H1 (cell line): ENCODE measurements at regions of chr13 and their contacts with region 1.

Region 1: DNA sequence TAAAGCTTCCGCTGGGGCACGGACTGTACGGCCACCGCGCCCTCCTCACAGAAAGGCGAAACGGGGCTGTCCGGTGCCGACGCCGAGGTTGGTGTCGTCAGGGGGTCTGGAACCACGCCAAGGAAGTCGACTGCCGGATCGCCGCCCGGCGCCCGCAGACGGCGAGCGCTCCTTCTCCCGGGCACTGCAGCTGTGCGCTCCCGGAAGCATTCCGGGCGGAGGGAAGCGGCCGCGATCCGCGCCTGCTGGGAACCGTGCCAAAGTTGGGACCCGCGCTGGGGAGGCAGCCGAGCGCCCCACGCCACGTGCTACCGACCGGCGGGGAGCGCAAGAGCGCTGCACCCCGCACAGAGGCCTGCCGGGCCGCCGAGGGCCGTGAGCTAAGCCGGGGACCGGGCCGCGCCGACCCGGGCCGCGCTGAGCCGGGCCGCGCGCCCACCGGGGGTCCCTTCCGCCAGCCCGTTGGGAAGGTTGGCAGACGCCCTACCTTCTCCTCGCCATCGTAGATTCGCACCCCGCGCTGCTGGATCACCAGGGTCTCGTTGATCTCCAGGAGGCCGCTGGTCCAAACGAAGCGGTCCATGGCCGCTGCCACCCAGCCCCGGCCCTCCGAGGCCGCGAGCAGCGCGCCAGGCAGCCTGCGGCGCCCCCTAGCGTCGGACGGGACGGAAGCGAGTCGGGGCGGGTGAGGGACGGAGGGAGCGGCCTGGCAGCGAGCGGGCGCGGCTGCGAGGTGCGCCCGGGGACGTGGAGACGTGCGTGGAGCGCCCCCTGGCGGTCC is at the start of gene VPS36:
- DNase-seq: peak; percentile 78 to 98
- H3K4me3 ChIP-seq: peak within 1 kb of the TSS; percentile 62 to 92 (median 90)
- H3K27ac ChIP-seq: peak within 1 kb of the TSS; percentile 60
- H3K4me1 ChIP-seq: peaks cover 2 to 6% (median 3%) of the 10 kb centered on the region in 4 experiments; a peak in 3 of 7 replicates
- H3K27me3 ChIP-seq: no peaks in the 10 kb centered on the region
- CTCF ChIP-seq: peak; percentile 89 to 99 (median 98)
- EP300 ChIP-seq: peak in 1 of 2 experiments; percentile 18; a peak in 1 of 3 replicates
- POLR2A ChIP-seq: peak; percentile 94
- RAD21 ChIP-seq: peak; percentile 77 to 94
- total RNA-seq, gene VPS36: 19.8 and 22.5 TPM in 2 replicates

Region 2: DNA sequence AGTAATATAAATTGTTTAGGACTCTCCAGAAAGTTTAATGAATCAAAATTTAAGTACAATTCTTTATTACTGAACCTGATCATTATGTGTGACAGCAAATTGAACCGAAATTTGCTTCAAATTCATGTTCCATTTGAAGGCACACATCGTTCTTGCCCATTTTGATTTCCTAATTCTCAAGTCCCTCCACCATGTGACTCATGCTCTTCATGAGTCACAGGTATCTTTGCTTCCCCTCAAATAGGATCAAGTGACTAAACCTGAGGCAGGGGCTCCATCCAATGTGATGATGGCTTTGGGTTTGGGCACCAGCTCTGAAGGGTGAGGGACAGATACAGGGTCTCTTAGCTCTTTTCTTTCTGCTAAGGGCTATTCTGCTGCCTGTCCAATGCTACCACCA is 130.3 kb before region 1 on chr13:
- CTCF ChIA-PET with region 1: no interaction called
- POLR2A ChIA-PET with region 1: no interaction called
- DNase-seq: no peak
- H3K4me3 ChIP-seq: no peak overlapping the region
- H3K27ac ChIP-seq: no peak overlapping the region
- H3K4me1 ChIP-seq: no peaks in the 10 kb centered on the region
- H3K27me3 ChIP-seq: no peaks in the 10 kb centered on the region; a peak in 1 of 7 replicates
- CTCF ChIP-seq: no peak
- EP300 ChIP-seq: no peak
- POLR2A ChIP-seq: no peak
- RAD21 ChIP-seq: no peak

Region 3: DNA sequence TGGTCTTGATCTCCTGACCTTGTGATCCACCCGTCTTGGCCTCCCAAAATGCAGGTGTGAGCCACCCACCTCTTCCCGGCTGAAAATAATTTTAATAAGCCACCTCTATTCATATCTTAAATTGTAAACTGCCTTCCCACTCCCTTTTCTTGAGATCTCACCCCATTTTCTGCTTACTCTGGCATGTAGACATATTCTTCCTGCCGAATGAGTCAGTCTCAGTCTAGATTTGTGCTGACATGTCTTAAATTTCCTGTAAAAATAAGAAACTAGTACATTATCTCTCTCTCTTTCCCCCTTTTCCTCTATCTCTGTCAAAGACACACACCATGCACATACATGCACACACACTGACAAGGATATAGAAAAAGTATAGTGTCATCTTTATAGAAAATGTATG is 105.2 kb before region 1 on chr13:
- CTCF ChIA-PET with region 1: interaction called, 13 read pairs
- POLR2A ChIA-PET with region 1: interaction called, 3 read pairs
- DNase-seq: no peak
- H3K4me3 ChIP-seq: no peak overlapping the region
- H3K27ac ChIP-seq: no peak overlapping the region
- H3K4me1 ChIP-seq: no peaks in the 10 kb centered on the region
- H3K27me3 ChIP-seq: no peaks in the 10 kb centered on the region
- CTCF ChIP-seq: no peak
- EP300 ChIP-seq: no peak
- POLR2A ChIP-seq: no peak
- RAD21 ChIP-seq: no peak

Region 4: GRCh38 chr13:52353193-52353592 is 97.0 kb before region 1 on chr13:
- CTCF ChIA-PET with region 1: interaction called, 12 read pairs
- POLR2A ChIA-PET with region 1: interaction called, 3 read pairs
- DNase-seq: no peak
- H3K4me3 ChIP-seq: no peak overlapping the region
- H3K27ac ChIP-seq: no peak overlapping the region
- H3K4me1 ChIP-seq: no peaks in the 10 kb centered on the region
- H3K27me3 ChIP-seq: no peaks in the 10 kb centered on the region
- CTCF ChIP-seq: no peak
- EP300 ChIP-seq: no peak
- POLR2A ChIP-seq: no peak
- RAD21 ChIP-seq: no peak

Region 5: GRCh38 chr13:52432456-52432855 is 17.7 kb before region 1 on chr13:
- CTCF ChIA-PET with region 1: interaction called, 10 read pairs
- POLR2A ChIA-PET with region 1: interaction called, 4 read pairs
- DNase-seq: no peak
- H3K4me3 ChIP-seq: no peak overlapping the region
- H3K27ac ChIP-seq: no peak overlapping the region
- H3K4me1 ChIP-seq: no peaks in the 10 kb centered on the region
- H3K27me3 ChIP-seq: no peaks in the 10 kb centered on the region
- CTCF ChIP-seq: no peak
- EP300 ChIP-seq: no peak
- POLR2A ChIP-seq: no peak
- RAD21 ChIP-seq: no peak